ENCODE measurements at regions of chr2 and their contacts with region 1.

Region 1: DNA sequence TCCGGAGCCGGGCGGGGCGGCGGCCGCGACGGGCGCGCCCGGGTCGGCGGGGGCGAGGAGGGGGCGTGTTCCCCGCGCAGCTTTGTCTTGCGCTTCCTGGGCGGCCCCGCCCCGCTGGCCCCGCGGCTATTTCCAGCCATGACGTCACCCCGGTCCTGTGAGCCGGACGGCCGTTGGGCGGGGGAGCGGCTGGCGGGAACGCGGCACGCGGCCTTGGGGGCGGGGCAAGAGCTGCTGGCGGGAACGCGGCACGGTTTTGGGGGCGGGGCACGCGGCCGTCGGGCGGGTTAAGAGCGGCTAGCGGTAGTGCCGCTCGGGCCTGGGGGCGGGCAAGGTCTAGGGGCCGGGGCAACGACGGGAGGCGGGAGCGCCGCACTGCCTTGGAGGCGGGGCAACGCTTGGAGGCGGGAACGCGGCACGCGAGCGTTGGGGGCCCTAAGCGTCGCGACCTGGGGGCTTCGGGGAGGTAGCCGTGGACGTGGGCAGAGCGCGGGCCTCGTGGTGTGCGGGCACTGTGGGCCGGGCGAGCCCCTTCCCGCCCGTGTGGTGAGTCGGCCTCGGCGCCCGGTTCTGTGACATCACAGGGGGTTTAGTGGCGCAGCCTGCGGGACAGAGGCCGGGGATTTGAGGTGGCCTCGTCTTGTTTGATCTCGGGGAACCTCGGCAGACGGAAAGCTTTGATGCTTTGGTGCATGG is 704 bp downstream of the KLF11 start:
- DNase-seq: peak; percentile 86
- H3K4me3 Mint-ChIP-seq: peak overlapping the region; percentile 77
- H3K27ac Mint-ChIP-seq: peak overlapping the region; percentile 66
- H3K4me1 Mint-ChIP-seq: peaks cover 14% of the 10 kb centered on the region
- H3K27me3 Mint-ChIP-seq: peaks cover 22% of the 10 kb centered on the region

Region 2: GRCh38 chr2:8927510-8928455 is 1116.3 kb before region 1 on chr2:
- intact Hi-C with region 1: no loop called
- DNase-seq: no peak
- H3K4me3 Mint-ChIP-seq: no peak overlapping the region
- H3K27ac Mint-ChIP-seq: no peak overlapping the region
- H3K4me1 Mint-ChIP-seq: no peaks in the 10 kb centered on the region
- H3K27me3 Mint-ChIP-seq: peaks cover 10% of the 10 kb centered on the region

Region 3: GRCh38 chr2:9142551-9143263 is 901.3 kb before region 1 on chr2:
- intact Hi-C with region 1: loop called (anchors 1 kb)
- DNase-seq: peak; percentile 70
- H3K4me3 Mint-ChIP-seq: no peak overlapping the region
- H3K27ac Mint-ChIP-seq: no peak overlapping the region
- H3K4me1 Mint-ChIP-seq: peaks cover 6% of the 10 kb centered on the region
- H3K27me3 Mint-ChIP-seq: peaks cover 16% of the 10 kb centered on the region

Region 4: GRCh38 chr2:9630749-9631483 is 413.1 kb before region 1 on chr2 and contains the start of gene YWHAQ:
- intact Hi-C with region 1: loop called (anchors 2 kb)
- DNase-seq: peak; percentile 97
- H3K4me3 Mint-ChIP-seq: peak within 1 kb of the TSS; percentile 97
- H3K27ac Mint-ChIP-seq: peak within 1 kb of the TSS; percentile 93
- H3K4me1 Mint-ChIP-seq: peaks cover 45% of the 10 kb centered on the region
- H3K27me3 Mint-ChIP-seq: peaks cover 9% of the 10 kb centered on the region
- total RNA-seq, gene YWHAQ: 290 and 311 TPM in 2 replicates

Region 5: GRCh38 chr2:9813312-9814133 is 230.5 kb before region 1 on chr2:
- intact Hi-C with region 1: loop called (anchors 1 kb)
- DNase-seq: peak; percentile 56
- H3K4me3 Mint-ChIP-seq: no peak overlapping the region
- H3K27ac Mint-ChIP-seq: peak overlapping the region; percentile 61
- H3K4me1 Mint-ChIP-seq: peaks cover 12% of the 10 kb centered on the region
- H3K27me3 Mint-ChIP-seq: peaks cover 11% of the 10 kb centered on the region

Region 6: DNA sequence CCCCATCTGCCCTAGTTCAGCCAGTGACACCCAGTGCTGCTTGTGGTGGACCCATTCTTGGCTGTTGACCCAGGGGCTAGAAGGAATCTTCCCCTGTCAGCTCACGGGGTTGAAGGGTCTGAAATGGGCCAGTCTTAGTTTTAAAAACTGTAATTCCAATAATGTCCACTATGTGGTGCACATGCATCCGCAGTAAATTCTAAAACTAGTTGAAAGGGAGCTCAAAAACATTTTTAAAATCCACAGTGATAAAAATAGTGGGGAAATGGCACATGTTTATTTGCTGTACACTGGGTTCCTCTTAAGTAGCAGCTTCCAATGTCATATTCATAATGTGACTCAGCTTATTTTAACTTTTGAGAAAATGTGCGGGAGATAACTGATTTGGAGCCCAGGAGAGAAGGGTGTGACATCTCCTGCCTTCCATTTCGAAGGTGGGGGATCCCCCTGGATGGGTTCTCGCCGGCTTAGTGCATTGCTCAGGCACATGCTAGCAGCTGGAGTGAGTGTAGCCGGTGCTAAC is 59.8 kb before region 1 on chr2:
- intact Hi-C with region 1: loop called (anchors 1 kb)
- DNase-seq: peak; percentile 14
- H3K4me3 Mint-ChIP-seq: no peak overlapping the region
- H3K27ac Mint-ChIP-seq: no peak overlapping the region
- H3K4me1 Mint-ChIP-seq: peaks cover 18% of the 10 kb centered on the region
- H3K27me3 Mint-ChIP-seq: peaks cover 11% of the 10 kb centered on the region

Region 7: GRCh38 chr2:10091182-10091888 is 47.3 kb after region 1 on chr2:
- intact Hi-C with region 1: no loop called
- DNase-seq: no peak
- H3K4me3 Mint-ChIP-seq: peak overlapping the region; percentile 64
- H3K27ac Mint-ChIP-seq: no peak overlapping the region
- H3K4me1 Mint-ChIP-seq: peaks cover 5% of the 10 kb centered on the region
- H3K27me3 Mint-ChIP-seq: peaks cover 53% of the 10 kb centered on the region